Aorta (tissue), 5 donors: ENCODE measurements at regions of chr6 and their contacts with region 1.

Region 1: GRCh38 chr6:47309291-47310130 is at the start of gene TNFRSF21:
- DNase-seq: peak; percentile 93
- ATAC-seq: peak; percentile 97
- H3K4me3 ChIP-seq: peak within 1 kb of the TSS; percentile 2 to 9
- H3K27ac ChIP-seq: no peak within 1 kb of the TSS
- H3K4me1 ChIP-seq: no peaks in the 10 kb centered on the region
- H3K27me3 ChIP-seq: no peaks in the 10 kb centered on the region
- total RNA-seq, gene TNFRSF21: 3.7 to 4.5 TPM

Region 2: DNA sequence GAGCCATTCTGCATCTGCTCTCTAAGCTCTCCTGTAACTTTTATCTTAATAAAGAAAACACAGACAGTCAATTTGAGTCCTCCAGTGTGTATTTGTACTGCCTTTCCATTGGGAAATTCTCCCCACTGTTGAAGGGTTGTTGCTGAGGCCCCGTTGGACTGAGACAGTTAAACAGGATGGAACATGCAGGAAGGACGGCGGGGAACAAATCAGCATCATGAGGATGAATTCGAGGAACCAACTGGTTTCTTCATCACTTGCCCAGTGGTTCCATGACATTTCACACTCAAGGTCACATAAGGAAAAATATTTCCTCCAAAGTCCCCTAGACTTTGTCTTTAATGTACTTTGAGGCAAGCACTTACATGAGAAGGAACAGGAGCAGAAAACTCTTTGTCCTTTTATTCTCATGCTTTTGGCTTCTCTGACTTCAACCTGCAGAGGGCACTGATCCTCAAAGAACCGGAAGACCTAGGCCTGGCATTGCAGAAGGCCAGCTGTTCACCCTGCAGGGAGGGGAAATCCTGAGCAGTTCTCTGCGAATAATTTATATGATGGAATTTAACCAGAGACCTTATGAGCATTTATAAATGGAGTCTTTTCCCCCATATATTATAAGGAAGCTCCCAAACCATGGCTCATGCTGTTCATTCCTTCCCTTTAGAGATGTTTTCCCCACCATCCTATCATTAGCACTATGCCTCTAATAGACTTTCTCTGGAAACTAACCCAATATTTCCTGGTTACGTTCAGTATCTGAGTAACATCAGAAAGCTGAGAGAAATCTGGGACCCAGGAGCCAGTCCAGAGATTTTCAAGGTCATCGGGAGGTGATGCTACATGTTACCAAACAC is 212.2 kb before region 1 on chr6:
- intact Hi-C with region 1: loop called in 1 of 2 experiments (anchors 10 kb)
- DNase-seq: peak; percentile 67 to 69
- ATAC-seq: no peak
- H3K4me3 ChIP-seq: no peak overlapping the region
- H3K27ac ChIP-seq: no peak overlapping the region
- H3K4me1 ChIP-seq: no peaks in the 10 kb centered on the region
- H3K27me3 ChIP-seq: no peaks in the 10 kb centered on the region

Region 3: DNA sequence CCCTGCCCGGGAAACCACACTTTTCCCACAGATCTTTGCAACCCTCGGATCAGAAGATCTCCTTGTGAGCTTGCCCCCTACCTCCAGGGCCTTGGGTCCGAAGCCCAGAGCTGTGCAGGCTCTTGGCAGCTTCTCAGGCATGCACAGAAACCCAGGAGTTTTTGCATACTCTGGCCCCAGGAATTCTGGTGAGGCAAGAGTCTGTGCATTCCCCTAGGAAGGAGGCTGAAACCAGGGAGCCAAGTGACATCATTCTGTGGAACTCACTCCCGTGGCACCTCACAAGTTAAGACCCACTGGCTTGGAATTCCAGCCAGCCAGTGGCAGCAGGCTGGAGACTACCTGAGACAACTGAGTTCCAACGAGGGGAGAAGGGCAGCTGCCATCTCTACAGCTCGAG is 99.9 kb before region 1 on chr6:
- intact Hi-C with region 1: no loop called
- DNase-seq: no peak
- ATAC-seq: no peak
- H3K4me3 ChIP-seq: no peak overlapping the region
- H3K27ac ChIP-seq: no peak overlapping the region
- H3K4me1 ChIP-seq: no peaks in the 10 kb centered on the region
- H3K27me3 ChIP-seq: no peaks in the 10 kb centered on the region